Natural killer cell (primary cell): ENCODE measurements at regions of chr17 and their contacts with region 1.

Region 1: GRCh38 chr17:40219073-40219860 is at the start of gene WIPF2:
- DNase-seq: peak; percentile 97 to 98
- ATAC-seq: peak; percentile 92 to 98 (median 94)
- H3K4me3 ChIP-seq: peak within 1 kb of the TSS; percentile 80
- H3K4me3 Mint-ChIP-seq: peak within 1 kb of the TSS; percentile 88
- H3K27ac ChIP-seq: peak within 1 kb of the TSS; percentile 99
- H3K27ac Mint-ChIP-seq: peak within 1 kb of the TSS; percentile 99
- H3K4me1 ChIP-seq: peaks cover 28% of the 10 kb centered on the region
- H3K4me1 Mint-ChIP-seq: peaks cover 27 to 37% of the 10 kb centered on the region in 2 donors
- H3K27me3 ChIP-seq: no peaks in the 10 kb centered on the region
- H3K27me3 Mint-ChIP-seq: no peaks in the 10 kb centered on the region
- CTCF ChIP-seq: peak; percentile 56
- total RNA-seq, gene WIPF2: 43.2 to 47.4 (median 43.9) TPM

Region 2: DNA sequence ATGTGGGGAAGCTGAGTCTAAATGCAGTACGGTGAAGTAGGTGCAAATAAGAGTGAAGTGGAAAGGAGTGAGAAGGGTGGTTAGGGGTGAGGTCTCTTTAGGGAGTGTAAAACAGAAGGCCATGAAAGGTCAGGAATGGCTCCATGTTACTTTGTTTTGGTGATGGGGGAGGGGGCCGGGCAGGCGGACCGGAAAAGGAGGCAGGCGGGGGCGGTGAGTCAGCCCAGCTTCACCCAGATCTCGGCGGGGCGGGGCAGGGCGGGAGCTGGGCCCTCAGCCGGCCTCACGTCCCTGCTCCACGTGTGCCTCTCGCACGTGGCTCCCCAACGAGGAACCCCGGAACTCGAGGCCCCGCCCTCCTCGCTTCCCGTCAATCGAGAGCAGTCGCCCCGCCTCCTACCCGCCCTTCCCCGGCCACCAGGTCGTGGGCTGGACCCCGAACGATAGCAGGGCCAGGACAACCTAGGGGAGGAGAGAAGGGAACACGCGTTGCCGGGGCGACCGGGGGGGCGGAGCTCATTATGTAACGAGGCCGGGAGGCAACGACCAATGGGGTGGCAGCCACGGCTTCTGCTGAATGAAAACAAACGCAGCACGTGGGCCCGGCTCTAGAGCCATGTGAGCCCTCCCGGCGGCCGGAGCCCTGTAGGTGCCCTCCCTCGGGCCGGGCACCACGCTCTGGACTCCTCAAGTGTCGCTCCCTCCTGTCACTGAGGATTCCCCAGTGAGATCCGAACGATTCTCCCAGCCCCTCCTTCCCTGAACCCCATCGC is 120.2 kb before region 1 on chr17:
- intact Hi-C with region 1: loop called (anchors 1 kb)
- DNase-seq: peak; percentile 98 to 99
- ATAC-seq: peak; percentile 65 to 83 (median 70)
- H3K4me3 ChIP-seq: peak overlapping the region; percentile 55
- H3K4me3 Mint-ChIP-seq: peak overlapping the region; percentile 98
- H3K27ac ChIP-seq: peak overlapping the region; percentile 90
- H3K27ac Mint-ChIP-seq: peak overlapping the region; percentile 94 to 96
- H3K4me1 ChIP-seq: peaks cover 87% of the 10 kb centered on the region
- H3K4me1 Mint-ChIP-seq: peaks cover 67 to 75% of the 10 kb centered on the region in 2 donors
- H3K27me3 ChIP-seq: no peaks in the 10 kb centered on the region
- H3K27me3 Mint-ChIP-seq: no peaks in the 10 kb centered on the region
- CTCF ChIP-seq: no peak